ENCODE measurements at regions of chr3 and their contacts with region 1.

Region 1: DNA sequence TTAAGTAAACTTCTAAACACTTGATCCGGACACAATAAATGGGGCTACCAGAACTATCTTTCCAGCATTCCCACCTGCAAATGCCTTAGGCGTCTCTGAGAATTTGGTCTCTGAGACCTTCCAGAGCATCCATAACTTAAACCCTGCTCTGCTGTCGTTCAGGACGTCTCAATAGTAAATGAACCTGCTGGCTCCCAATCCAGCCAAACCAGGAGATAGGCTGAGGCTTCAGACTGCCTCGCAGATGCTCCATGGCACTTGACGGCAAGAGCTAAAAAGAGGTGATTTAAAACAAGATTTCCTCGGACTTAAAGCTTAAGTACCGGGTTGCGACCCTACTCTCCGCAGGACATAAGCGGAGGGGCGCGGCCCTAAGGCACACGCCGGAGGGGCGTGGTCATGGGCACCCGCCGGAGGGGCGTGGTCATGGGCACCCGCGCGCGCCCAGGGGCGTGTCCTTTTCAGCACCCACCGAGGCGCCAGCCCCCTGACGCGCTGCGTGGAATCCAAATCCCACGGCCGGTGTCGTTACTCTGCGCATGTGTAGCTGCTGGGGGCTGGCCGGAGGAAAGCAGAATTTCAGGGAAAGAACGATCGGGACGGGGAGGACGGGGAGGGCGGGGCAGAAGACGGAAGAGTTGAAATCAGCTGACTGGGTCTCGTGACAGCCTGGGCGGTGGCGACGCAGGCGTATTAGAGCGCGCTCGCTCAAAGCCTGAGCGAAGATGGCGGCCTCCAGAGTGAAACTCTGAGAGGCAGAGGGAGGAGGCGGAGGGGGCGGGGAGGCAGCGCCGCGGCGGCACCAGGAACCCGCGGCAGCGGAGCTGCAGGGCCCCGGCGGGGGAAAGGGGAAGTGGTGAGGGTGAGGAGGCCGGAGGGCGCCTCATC is at the start of gene DNAJC13:
- DNase-seq: peak; percentile 73 to 96
- H3K4me3 ChIP-seq: peak within 1 kb of the TSS; percentile 79 to 98
- H3K27ac ChIP-seq: peak within 1 kb of the TSS; percentile 77 to 87
- H3K4me1 ChIP-seq: peaks cover 0 to 15% of the 10 kb centered on the region in 2 donors
- H3K27me3 ChIP-seq: no peaks in the 10 kb centered on the region
- CTCF ChIP-seq: no peak
- total RNA-seq, gene DNAJC13: 29.4 TPM

Region 2: GRCh38 chr3:131026321-131027178 is 1390.5 kb before region 1 on chr3 and contains the starts of genes ASTE1 and NEK11:
- intact Hi-C with region 1: loop called (anchors 10 kb)
- DNase-seq: peak; percentile 69 to 94
- H3K4me3 ChIP-seq: peak within 1 kb of the TSS; percentile 72 to 83
- H3K27ac ChIP-seq: peak within 1 kb of the TSS; percentile 77 to 86
- H3K4me1 ChIP-seq: peaks cover 0 to 18% of the 10 kb centered on the region in 2 donors
- H3K27me3 ChIP-seq: no peaks in the 10 kb centered on the region
- CTCF ChIP-seq: no peak
- total RNA-seq, gene ASTE1: 14.0 TPM
- total RNA-seq, gene NEK11: 4.0 TPM

Region 3: GRCh38 chr3:132445817-132446216 is 28.8 kb after region 1 on chr3:
- intact Hi-C with region 1: loop called (anchors 1 kb)
- DNase-seq: no peak
- H3K4me3 ChIP-seq: no peak overlapping the region
- H3K27ac ChIP-seq: no peak overlapping the region
- H3K4me1 ChIP-seq: peaks cover 7 to 29% of the 10 kb centered on the region in 2 donors
- H3K27me3 ChIP-seq: no peaks in the 10 kb centered on the region
- CTCF ChIP-seq: no peak

Region 4: GRCh38 chr3:133805527-133806475 is 1388.8 kb after region 1 on chr3 and contains the start of gene SRPRB:
- intact Hi-C with region 1: loop called (anchors 5 kb)
- DNase-seq: peak; percentile 76 to 97
- H3K4me3 ChIP-seq: peak within 1 kb of the TSS; percentile 87
- H3K27ac ChIP-seq: peak within 1 kb of the TSS; percentile 54 to 58
- H3K4me1 ChIP-seq: peaks cover 0 to 3% of the 10 kb centered on the region in 2 donors
- H3K27me3 ChIP-seq: no peaks in the 10 kb centered on the region
- CTCF ChIP-seq: no peak
- total RNA-seq, gene SRPRB: 16.1 TPM